ENCODE measurements at regions of chr11 and their contacts with region 1.

Region 1: DNA sequence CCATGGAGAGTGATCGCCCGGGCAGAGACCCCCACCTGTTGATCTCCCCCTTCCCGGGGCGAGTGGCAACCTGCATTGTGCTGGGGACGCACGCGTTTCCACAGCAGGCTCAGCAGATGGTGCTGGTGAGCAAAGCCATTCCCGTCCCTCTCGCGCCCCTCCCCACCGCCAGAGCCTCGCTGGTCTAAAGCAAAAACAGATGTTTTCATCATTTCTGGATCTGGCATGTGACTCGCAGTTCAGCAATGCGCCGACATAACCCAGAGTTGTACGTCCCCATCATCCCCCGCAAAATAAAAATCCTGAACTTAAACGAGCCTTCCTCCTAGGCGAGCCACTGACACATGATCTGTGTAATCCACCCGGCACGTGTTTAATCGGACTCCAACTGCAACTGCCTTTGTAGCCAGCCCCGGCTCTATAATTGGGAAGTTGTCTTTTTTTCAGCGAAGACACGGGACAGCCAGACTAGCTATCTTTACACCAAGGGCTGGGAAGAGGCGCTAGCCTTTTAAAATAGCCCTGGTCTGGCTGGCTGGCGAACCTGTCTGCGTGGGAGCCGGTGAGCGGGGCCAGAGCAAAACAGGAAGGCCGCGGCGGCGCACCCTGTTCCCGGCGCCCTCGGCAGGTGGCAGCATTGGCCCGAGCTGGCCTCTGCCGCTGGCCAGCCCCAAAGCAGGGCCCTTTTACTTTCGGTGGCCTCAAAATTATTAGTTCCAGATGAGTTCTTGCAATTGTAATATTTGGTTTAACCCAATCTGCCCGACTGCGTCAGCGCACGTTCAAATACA is 203.0 kb upstream of the SORL1-AS1 start:
- DNase-seq: no peak
- H3K4me3 ChIP-seq: peak overlapping the region; percentile 38 to 69 (median 45)
- H3K27ac ChIP-seq: peak overlapping the region; percentile 81 to 93 (median 85)
- H3K4me1 ChIP-seq: peaks cover 8 to 38% (median 10%) of the 10 kb centered on the region in 3 donors
- H3K27me3 ChIP-seq: peaks cover 0 to 13% (median 0%) of the 10 kb centered on the region in 4 donors
- CTCF ChIP-seq: peak; percentile 52 to 98 (median 86)
- POLR2A ChIP-seq: no peak

Region 2: GRCh38 chr11:122101625-122102291 is 446.0 kb after region 1 on chr11:
- intact Hi-C with region 1: loop called (anchors 5 kb)
- DNase-seq: no peak
- H3K4me3 ChIP-seq: peak overlapping the region; percentile 32 to 69 (median 52)
- H3K27ac ChIP-seq: peak overlapping the region; percentile 70 to 87 (median 84)
- H3K4me1 ChIP-seq: peaks cover 2 to 40% (median 4%) of the 10 kb centered on the region in 3 donors
- H3K27me3 ChIP-seq: peaks cover 0 to 45% (median 0%) of the 10 kb centered on the region in 4 donors
- CTCF ChIP-seq: peak; percentile 24 to 63 (median 54)
- POLR2A ChIP-seq: no peak

Region 3: DNA sequence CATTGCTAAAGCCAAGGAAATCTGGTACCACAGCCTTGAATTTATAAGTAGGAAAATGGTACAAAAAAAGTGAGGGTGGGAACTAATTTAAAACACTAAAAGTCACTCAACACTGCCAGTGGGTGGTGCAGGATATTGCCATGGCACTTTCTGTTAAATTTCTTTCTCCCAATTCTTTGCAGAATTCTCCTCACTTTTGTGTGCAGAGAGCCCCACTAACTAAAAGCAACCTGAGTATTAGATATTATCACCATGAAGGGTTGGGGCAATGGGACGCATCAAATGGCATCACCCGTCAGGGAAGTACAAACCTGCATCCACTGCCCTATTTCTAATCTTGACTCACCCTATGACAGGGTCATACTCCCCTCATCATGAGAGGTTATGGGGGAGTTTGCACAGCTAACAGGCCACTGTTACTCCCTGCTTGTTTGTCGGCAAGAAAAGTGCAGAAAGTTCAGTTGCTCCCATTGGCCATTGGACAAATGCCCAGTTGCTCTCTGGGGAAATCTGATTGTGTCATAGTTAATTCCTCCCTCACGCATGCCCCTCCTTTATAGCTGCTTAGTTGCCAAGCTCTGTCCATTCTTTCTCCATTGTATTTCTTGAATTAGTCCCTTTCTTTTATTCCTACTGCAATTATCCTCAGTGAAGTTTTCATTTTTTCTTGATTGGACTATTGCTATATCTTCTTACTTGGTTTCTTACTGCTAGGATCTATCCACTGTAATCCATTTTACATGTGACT is 554.1 kb after region 1 on chr11:
- intact Hi-C with region 1: loop called (anchors 5 kb)
- DNase-seq: no peak
- H3K4me3 ChIP-seq: no peak overlapping the region
- H3K27ac ChIP-seq: peak overlapping the region in 3 of 4 donors; percentile 11 to 57 (median 52)
- H3K4me1 ChIP-seq: peaks cover 0 to 49% (median 26%) of the 10 kb centered on the region in 3 donors
- H3K27me3 ChIP-seq: no peaks in the 10 kb centered on the region
- CTCF ChIP-seq: no peak
- POLR2A ChIP-seq: no peak

Region 4: DNA sequence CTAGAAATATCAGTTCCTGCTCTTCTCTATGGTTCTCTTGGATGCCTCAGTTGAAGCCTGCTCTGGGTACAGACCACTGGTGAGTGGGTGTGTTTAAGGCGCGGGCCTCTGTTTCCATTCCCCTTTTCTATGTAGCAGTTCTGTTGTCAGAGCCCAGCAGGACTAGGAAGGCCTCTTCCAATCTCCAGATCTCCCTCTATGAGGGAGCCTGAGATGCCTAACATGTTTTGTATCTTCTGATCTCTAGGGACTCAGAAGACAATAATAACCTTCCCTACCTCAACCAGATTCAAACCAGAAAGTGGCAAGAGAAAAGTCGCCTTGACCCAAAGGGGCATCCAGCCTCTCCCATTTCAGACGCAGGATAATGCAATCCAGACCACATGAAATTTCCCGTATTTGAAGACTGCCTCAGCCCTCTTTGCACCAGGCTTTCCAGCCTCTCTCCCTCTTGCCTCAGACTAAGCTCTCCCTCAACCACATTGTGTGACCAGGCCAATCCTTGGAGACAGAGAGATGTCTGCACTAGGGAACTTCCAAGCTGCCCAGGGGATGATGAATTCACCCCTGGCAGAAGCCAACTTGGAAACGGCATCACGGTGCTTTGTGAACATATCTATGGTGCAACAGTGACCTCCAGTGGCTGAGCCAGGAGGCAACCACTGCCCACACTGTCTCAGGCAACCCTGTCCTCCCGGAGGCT is 849.7 kb after region 1 on chr11:
- intact Hi-C with region 1: loop called (anchors 5 kb)
- DNase-seq: peak; percentile 9
- H3K4me3 ChIP-seq: no peak overlapping the region
- H3K27ac ChIP-seq: peak overlapping the region in 1 of 4 donors; percentile 39
- H3K4me1 ChIP-seq: peaks cover 0 to 5% (median 0%) of the 10 kb centered on the region in 3 donors
- H3K27me3 ChIP-seq: no peaks in the 10 kb centered on the region
- CTCF ChIP-seq: peak; percentile 26 to 85 (median 78)
- POLR2A ChIP-seq: no peak

Measured in esophagus squamous epithelium (tissue), 5 donors.